BJ (cell line): ENCODE measurements at regions of chr10 and their contacts with region 1.

Region 1: DNA sequence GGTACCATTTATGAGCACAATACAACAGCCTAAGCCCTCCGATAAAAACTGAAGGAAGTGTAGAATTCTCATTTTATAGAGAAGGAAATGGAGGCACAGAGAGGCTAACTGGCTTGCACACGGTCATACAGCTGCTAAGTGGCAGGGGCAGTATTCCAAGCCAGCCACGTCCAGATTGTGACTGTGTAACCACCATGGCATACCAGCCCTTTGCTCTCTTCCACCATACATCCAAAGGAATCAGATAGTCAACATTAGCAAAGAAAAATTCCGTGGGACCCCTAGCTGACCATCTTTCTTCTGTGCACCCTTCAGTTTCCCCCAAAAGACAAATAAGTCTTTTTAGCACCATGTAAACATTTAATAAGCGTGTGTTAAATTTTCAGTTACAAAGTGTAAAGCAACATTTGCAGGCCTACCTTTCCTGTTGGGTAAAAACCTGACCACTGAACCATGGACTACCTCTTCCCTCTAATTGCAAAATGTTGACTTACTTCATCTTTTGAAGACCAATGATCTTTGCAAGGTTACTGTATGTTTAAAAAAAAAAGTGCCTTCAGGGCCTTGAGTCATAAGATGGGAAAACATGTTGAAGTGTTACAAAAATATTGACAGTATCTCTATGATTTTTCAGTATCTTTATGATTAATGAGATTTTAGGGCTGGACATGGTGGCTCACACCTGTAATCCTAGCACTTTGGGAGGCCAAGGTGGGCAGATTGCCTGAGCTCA is 24.3 kb upstream of the PDZD8 start:
- DNase-seq: no peak
- H3K4me3 ChIP-seq: no peak overlapping the region
- H3K27me3 ChIP-seq: no peaks in the 10 kb centered on the region
- CTCF ChIP-seq: no peak

Region 2: DNA sequence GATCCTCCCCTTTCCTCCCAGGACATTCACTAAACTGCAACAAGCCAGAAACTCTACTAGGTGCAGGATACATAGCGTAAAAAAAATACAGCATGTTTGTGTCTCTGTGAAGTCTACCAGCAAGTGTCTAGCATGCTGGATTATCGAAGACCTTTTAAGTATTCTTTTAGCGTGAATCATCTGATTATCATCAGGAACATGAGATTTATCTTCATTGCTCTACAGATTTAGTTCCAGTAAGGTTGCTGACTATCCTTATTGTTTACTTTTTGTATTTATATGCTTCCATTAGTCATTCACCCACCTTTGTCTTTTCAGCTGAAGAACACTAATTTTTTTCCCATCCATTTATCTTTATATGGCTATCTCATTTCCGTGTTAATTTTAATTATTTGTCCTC is 87.1 kb before region 1 on chr10:
- CTCF ChIA-PET with region 1: no interaction called
- POLR2A ChIA-PET with region 1: interaction called, 12 read pairs
- DNase-seq: no peak
- H3K4me3 ChIP-seq: no peak overlapping the region
- H3K27me3 ChIP-seq: no peaks in the 10 kb centered on the region
- CTCF ChIP-seq: no peak